ENCODE measurements at regions of chr11 and their contacts with region 1.

Region 1: GRCh38 chr11:47269002-47269828 is 718 bp upstream of the MADD start:
- DNase-seq: peak; percentile 82 to 89 (median 87)
- ATAC-seq: peak; percentile 82
- H3K4me3 ChIP-seq: peak overlapping the region; percentile 65
- H3K4me3 Mint-ChIP-seq: peak overlapping the region; percentile 78 to 97 (median 87)
- H3K27ac ChIP-seq: peak overlapping the region; percentile 95
- H3K27ac Mint-ChIP-seq: peak overlapping the region; percentile 93 to 99 (median 96)
- H3K4me1 ChIP-seq: peaks cover 27 to 43% of the 10 kb centered on the region in 2 donors
- H3K4me1 Mint-ChIP-seq: peaks cover 38 to 62% (median 59%) of the 10 kb centered on the region in 7 donors
- H3K27me3 ChIP-seq: no peaks in the 10 kb centered on the region
- H3K27me3 Mint-ChIP-seq: no peaks in the 10 kb centered on the region

Region 2: DNA sequence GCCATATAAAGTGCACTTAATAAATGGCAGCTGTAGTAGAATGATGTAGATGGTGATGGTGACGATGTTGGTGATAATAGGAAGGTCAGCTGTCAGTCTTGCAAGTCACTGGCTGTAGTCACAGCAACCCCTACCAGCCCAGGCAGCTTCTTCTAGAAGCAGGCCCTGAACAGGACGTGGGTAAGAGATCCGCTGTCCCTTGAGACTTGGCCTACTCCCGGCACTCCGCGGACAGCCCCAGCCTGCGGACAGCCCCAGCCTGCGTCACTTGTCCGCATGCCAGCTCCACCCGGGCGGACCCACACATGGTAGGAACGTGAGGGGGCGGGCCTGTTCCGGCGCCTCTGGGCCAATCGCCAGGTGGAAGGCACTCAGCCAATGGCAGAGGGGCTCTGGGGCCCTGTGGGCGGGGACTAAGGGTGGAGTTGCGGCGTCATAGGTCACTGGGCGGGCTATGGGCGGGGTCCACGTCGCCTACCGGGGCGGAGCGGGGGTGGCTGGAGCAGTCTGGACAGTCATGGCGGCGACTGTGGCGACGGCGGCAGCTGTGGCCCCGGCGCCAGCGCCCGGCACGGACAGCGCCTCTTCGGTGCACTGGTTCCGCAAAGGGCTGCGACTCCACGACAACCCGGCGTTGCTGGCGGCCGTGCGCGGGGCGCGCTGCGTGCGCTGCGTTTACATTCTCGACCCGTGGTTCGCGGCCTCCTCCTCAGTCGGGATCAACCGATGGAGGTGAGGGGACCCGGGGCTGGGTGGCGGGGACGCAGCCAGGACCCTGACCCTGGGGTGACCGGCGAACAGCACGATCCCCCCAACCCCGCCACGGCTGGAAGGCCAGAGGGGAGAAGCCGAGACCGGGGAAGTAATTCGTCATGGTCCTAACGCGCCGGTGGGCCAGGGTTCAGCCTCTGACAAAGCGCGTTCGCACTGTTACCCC is 1422.0 kb before region 1 on chr11 and contains the start of gene CRY2:
- CTCF ChIA-PET with region 1: no interaction called
- POLR2A ChIA-PET with region 1: no interaction called
- intact Hi-C with region 1: loop called in 1 of 2 experiments (anchors 2 kb)
- DNase-seq: peak; percentile 94 to 98 (median 97)
- ATAC-seq: peak; percentile 90
- H3K4me3 ChIP-seq: peak within 1 kb of the TSS; percentile 85
- H3K4me3 Mint-ChIP-seq: peak within 1 kb of the TSS; percentile 78 to 96 (median 90)
- H3K27ac ChIP-seq: peak within 1 kb of the TSS; percentile 91
- H3K27ac Mint-ChIP-seq: peak within 1 kb of the TSS; percentile 89 to 99 (median 96)
- H3K4me1 ChIP-seq: peaks cover 21 to 34% of the 10 kb centered on the region in 2 donors
- H3K4me1 Mint-ChIP-seq: peaks cover 40 to 68% (median 54%) of the 10 kb centered on the region in 7 donors
- H3K27me3 ChIP-seq: no peaks in the 10 kb centered on the region
- H3K27me3 Mint-ChIP-seq: peaks cover 0 to 20% (median 0%) of the 10 kb centered on the region in 5 donors
- total RNA-seq, gene CRY2: 31.1 to 202 (median 66.9) TPM

Region 3: DNA sequence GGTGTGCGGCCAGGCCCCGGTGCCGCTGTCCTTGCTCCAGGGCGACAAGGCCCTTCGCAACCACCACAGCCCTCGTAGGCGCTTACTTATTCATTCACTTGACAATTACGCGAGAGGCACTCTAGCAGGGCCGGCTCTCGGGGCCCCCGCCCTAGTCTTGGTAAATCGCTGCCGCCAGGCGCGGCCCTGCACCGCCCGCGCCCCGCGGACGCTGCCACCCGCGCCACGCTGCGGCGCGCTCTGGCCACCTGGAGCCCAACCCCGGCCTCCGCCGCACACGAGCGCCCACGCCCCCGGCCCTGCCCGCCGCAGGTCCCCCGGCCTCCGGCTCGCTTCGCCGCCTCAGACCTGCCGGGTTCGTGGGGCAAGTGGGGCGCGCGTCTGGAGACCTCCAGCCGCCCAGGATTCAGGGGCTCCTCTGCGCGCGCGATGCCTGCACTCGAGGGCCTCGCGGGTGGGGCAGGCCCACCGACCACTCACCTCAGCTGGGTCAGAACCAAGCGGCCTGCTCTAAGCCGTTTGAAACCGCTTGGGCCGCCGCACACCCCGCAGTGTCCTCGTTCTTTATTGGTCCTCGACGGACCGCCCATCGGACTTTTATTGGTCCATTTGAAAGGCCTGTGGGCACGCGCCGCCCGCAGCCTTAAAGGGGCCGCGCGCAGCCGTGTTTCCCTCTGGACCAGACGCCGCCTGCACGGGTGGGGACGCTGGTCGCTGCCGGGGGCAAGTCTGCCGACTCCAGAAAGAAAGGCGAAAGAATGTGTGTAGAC is 423.3 kb before region 1 on chr11 and contains the start of gene CKAP5:
- CTCF ChIA-PET with region 1: no interaction called
- POLR2A ChIA-PET with region 1: no interaction called
- intact Hi-C with region 1: loop called in 1 of 2 experiments (anchors 1 kb)
- DNase-seq: peak; percentile 63 to 89 (median 80)
- ATAC-seq: peak; percentile 96
- H3K4me3 ChIP-seq: peak within 1 kb of the TSS; percentile 71
- H3K4me3 Mint-ChIP-seq: peak within 1 kb of the TSS; percentile 85 to 99 (median 97)
- H3K27ac ChIP-seq: peak within 1 kb of the TSS; percentile 71
- H3K27ac Mint-ChIP-seq: peak within 1 kb of the TSS; percentile 88 to 97 (median 93)
- H3K4me1 ChIP-seq: peaks cover 0 to 14% of the 10 kb centered on the region in 2 donors
- H3K4me1 Mint-ChIP-seq: peaks cover 33 to 50% (median 43%) of the 10 kb centered on the region in 7 donors
- H3K27me3 ChIP-seq: no peaks in the 10 kb centered on the region
- H3K27me3 Mint-ChIP-seq: no peaks in the 10 kb centered on the region
- total RNA-seq, gene CKAP5: 28.3 to 126 (median 46.0) TPM

Region 4: GRCh38 chr11:47213985-47214564 is 55.1 kb before region 1 on chr11:
- CTCF ChIA-PET with region 1: interaction called, 5 read pairs
- POLR2A ChIA-PET with region 1: interaction called, 48 read pairs
- intact Hi-C with region 1: loop called (anchors 1 kb)
- DNase-seq: peak; percentile 64 to 85 (median 76)
- ATAC-seq: peak; percentile 86
- H3K4me3 ChIP-seq: peak overlapping the region; percentile 89
- H3K4me3 Mint-ChIP-seq: peak overlapping the region; percentile 92 to 100 (median 96)
- H3K27ac ChIP-seq: peak overlapping the region; percentile 85
- H3K27ac Mint-ChIP-seq: peak overlapping the region; percentile 96 to 100 (median 99)
- H3K4me1 ChIP-seq: peaks cover 3 to 21% of the 10 kb centered on the region in 2 donors
- H3K4me1 Mint-ChIP-seq: peaks cover 26 to 39% (median 32%) of the 10 kb centered on the region in 7 donors
- H3K27me3 ChIP-seq: no peaks in the 10 kb centered on the region
- H3K27me3 Mint-ChIP-seq: no peaks in the 10 kb centered on the region

Region 5: DNA sequence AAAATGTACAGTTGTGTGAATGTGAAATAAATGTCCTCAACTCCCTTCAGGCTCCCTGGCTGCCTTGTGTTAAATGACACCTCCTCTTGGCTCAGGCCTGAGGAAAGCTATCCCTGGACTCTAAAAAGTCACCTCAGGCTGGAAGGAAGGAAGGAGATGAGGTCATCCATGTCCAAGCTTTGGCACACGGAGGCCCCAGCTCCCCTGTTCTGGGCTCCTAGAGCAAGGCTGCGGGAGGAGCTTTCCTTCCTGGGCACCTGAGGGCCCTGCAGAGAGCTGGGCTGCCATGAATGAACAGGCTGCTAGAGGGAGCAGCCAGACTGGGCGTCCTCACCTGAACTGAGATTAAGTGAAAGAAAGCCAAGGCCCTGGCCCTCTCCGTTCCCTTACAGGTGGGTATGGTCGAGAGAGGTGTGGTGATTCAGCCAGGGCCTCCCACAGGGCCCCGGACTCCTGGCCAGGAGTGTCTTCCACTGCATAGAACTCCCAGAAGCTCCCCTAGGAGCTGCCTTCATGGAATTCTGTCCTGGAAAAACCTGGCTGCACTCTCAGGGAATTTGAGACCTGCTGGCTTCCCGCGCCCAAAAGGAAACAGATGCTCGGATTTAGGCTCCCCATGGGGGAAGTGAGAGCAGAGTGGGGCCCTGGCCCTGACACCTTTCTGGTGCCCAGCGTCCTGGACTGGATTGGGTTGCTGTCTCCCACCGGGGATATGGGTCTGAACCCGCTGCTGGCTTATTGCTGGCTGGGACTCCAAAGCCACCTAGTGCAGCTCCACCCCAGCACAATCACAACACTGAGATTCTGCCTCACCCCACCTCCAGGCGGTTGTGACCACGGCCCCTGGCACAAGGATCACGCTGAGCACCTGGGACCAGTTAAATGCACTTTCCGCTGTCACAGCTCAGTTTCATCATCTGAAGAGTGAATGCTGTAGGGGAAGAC is 61.0 kb after region 1 on chr11:
- CTCF ChIA-PET with region 1: no interaction called
- POLR2A ChIA-PET with region 1: no interaction called
- intact Hi-C with region 1: no loop called
- DNase-seq: peak in 2 of 9 donors; percentile 11 to 13
- ATAC-seq: no peak
- H3K4me3 ChIP-seq: no peak overlapping the region
- H3K4me3 Mint-ChIP-seq: no peak overlapping the region
- H3K27ac ChIP-seq: no peak overlapping the region
- H3K27ac Mint-ChIP-seq: peak overlapping the region in 4 of 9 donors; percentile 5 to 67 (median 51)
- H3K4me1 ChIP-seq: no peaks in the 10 kb centered on the region
- H3K4me1 Mint-ChIP-seq: no peaks in the 10 kb centered on the region
- H3K27me3 ChIP-seq: no peaks in the 10 kb centered on the region
- H3K27me3 Mint-ChIP-seq: no peaks in the 10 kb centered on the region

Region 6: GRCh38 chr11:47407746-47408590 is 138.8 kb after region 1 on chr11 and contains the start of gene SLC39A13:
- CTCF ChIA-PET with region 1: interaction called, 4 read pairs
- POLR2A ChIA-PET with region 1: interaction called, 5 read pairs
- intact Hi-C with region 1: loop called (anchors 1 kb)
- DNase-seq: peak; percentile 80 to 99 (median 88)
- ATAC-seq: peak; percentile 91
- H3K4me3 ChIP-seq: peak within 1 kb of the TSS; percentile 71
- H3K4me3 Mint-ChIP-seq: peak within 1 kb of the TSS; percentile 87 to 99 (median 91)
- H3K27ac ChIP-seq: peak within 1 kb of the TSS; percentile 83
- H3K27ac Mint-ChIP-seq: peak within 1 kb of the TSS; percentile 90 to 98 (median 94)
- H3K4me1 ChIP-seq: peaks cover 8 to 13% of the 10 kb centered on the region in 2 donors
- H3K4me1 Mint-ChIP-seq: peaks cover 4 to 23% (median 21%) of the 10 kb centered on the region in 7 donors
- H3K27me3 ChIP-seq: no peaks in the 10 kb centered on the region
- H3K27me3 Mint-ChIP-seq: no peaks in the 10 kb centered on the region
- total RNA-seq, gene SLC39A13: 29.9 to 60.4 (median 45.1) TPM

Region 7: GRCh38 chr11:47578524-47579460 is 309.6 kb after region 1 on chr11 and contains the starts of genes KBTBD4 and NDUFS3:
- CTCF ChIA-PET with region 1: no interaction called
- POLR2A ChIA-PET with region 1: no interaction called
- intact Hi-C with region 1: loop called (anchors 2 to 5 kb)
- DNase-seq: peak; percentile 85 to 95 (median 88)
- ATAC-seq: peak; percentile 97
- H3K4me3 ChIP-seq: peak within 1 kb of the TSS; percentile 95
- H3K4me3 Mint-ChIP-seq: peak within 1 kb of the TSS; percentile 95 to 100 (median 99)
- H3K27ac ChIP-seq: peak within 1 kb of the TSS; percentile 80
- H3K27ac Mint-ChIP-seq: peak within 1 kb of the TSS; percentile 97 to 100 (median 99)
- H3K4me1 ChIP-seq: peaks cover 26 to 28% of the 10 kb centered on the region in 2 donors
- H3K4me1 Mint-ChIP-seq: peaks cover 17 to 51% (median 41%) of the 10 kb centered on the region in 7 donors
- H3K27me3 ChIP-seq: no peaks in the 10 kb centered on the region
- H3K27me3 Mint-ChIP-seq: no peaks in the 10 kb centered on the region
- total RNA-seq, gene KBTBD4: 15.0 to 26.5 (median 20.9) TPM
- total RNA-seq, gene NDUFS3: 68.6 to 116 (median 85.2) TPM

Region 8: GRCh38 chr11:47847892-47848635 is 578.8 kb after region 1 on chr11 and contains the start of gene NUP160:
- CTCF ChIA-PET with region 1: no interaction called
- POLR2A ChIA-PET with region 1: no interaction called
- intact Hi-C with region 1: loop called in 1 of 2 experiments (anchors 5 kb)
- DNase-seq: peak; percentile 78 to 92 (median 85)
- ATAC-seq: peak; percentile 92
- H3K4me3 ChIP-seq: peak within 1 kb of the TSS; percentile 88
- H3K4me3 Mint-ChIP-seq: peak within 1 kb of the TSS; percentile 88 to 100 (median 98)
- H3K27ac ChIP-seq: peak within 1 kb of the TSS; percentile 97
- H3K27ac Mint-ChIP-seq: peak within 1 kb of the TSS; percentile 72 to 100 (median 98)
- H3K4me1 ChIP-seq: peaks cover 12 to 66% of the 10 kb centered on the region in 2 donors
- H3K4me1 Mint-ChIP-seq: peaks cover 38 to 71% (median 62%) of the 10 kb centered on the region in 7 donors
- H3K27me3 ChIP-seq: no peaks in the 10 kb centered on the region
- H3K27me3 Mint-ChIP-seq: peaks cover 0 to 2% (median 0%) of the 10 kb centered on the region in 5 donors
- total RNA-seq, gene NUP160: 53.9 to 68.0 (median 65.5) TPM

Measured in naive thymus-derived CD4-positive, alpha-beta T cell (primary cell).